ENCODE measurements at regions of chr17 and their contacts with region 1.

Region 1: GRCh38 chr17:75531730-75532090 is 6.2 kb downstream of the LLGL2 start:
- DNase-seq: no peak

Region 2: GRCh38 chr17:75456417-75457046 is 75.2 kb before region 1 on chr17 and contains the start of gene TMEM94:
- intact Hi-C with region 1: no loop called
- DNase-seq: peak; percentile 97
- total RNA-seq, gene TMEM94: 53.8 to 64.3 TPM

Region 3: GRCh38 chr17:75610103-75610984 is 78.6 kb after region 1 on chr17:
- intact Hi-C with region 1: loop called in 1 of 2 experiments (anchors 2 kb)
- DNase-seq: no peak

Region 4: DNA sequence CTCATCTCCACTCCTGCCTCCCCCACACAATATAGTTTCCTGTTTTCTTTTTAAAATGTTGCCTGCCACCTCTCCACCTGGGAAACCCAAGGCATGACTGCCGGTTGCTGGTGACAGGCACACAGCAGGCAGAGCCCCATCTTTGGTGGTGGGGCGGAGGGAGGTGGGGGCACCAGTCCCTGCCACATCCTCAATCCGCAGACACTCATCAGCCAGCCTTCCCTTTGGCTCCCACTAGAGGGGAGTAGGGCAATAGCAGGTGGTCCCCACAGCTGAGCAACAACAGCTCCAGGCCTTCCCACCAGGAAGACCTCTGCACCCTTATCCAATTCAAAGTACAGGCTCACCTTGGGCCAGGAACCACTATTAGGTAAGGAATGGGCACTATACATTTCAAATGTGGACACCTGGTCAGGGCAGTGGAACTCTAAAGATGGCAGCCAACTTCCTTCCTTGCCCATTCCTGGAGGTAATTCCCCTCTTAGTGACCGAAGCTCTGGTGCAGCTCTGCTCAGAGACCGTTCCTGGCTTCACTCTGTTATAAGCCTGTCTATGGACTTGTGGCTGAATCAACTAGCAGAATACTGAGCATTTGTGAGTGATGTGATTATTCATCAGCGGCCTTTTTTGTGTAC is 121.3 kb after region 1 on chr17:
- intact Hi-C with region 1: no loop called
- DNase-seq: peak; percentile 32

Measured in posterior vena cava (tissue), 2 donors.